SK-N-SH (cell line): ENCODE measurements at regions of chr11 and their contacts with region 1.

Region 1: GRCh38 chr11:33857933-33858371 is 33.9 kb downstream of the LMO2 start:
- DNase-seq: peak; percentile 81
- H3K4me3 ChIP-seq: no peak overlapping the region; a peak in 1 of 4 replicates
- H3K27ac ChIP-seq: no peak overlapping the region
- H3K4me1 ChIP-seq: peaks cover 0 to 5% of the 10 kb centered on the region in 2 experiments; a peak in 2 of 4 replicates
- H3K27me3 ChIP-seq: peaks cover 59% of the 10 kb centered on the region
- CTCF ChIP-seq: peak; percentile 93
- EP300 ChIP-seq: no peak
- RAD21 ChIP-seq: peak; percentile 90

Region 2: GRCh38 chr11:33606762-33607161 is 251.2 kb before region 1 on chr11:
- CTCF ChIA-PET with region 1: no interaction called
- POLR2A ChIA-PET with region 1: no interaction called
- DNase-seq: no peak
- H3K4me3 ChIP-seq: no peak overlapping the region
- H3K27ac ChIP-seq: no peak overlapping the region
- H3K4me1 ChIP-seq: no peaks in the 10 kb centered on the region
- H3K27me3 ChIP-seq: no peaks in the 10 kb centered on the region
- CTCF ChIP-seq: no peak
- EP300 ChIP-seq: no peak
- RAD21 ChIP-seq: no peak

Region 3: DNA sequence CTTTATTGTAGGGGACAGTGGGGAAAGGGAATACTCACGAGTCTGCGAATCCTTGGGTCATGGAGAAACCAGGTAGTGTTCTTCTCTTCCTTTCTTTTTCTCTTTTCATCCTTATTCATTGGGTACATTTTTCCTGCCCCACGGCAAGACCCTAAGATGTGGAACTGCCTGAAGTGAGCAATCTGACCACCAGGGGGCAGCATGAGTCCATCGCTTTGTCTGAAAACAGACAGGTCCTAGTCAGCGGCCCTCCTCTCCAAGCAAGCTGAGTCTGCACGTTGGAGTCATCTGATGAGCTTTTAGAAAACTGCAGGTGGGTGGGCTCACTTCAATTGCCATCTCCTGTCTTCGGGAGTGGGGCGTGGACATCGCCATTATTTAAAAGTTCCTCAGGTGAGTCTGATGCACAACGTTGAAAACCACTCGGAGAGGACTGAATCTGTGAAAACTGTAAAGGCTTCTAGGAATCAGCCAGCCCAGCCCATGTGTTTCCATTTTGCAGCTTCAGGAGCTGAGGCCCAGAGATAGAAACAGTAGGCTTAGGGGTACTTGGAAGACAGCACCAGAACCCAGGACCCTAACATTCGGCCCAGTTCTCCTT is 49.6 kb before region 1 on chr11:
- CTCF ChIA-PET with region 1: interaction called, 23 read pairs
- POLR2A ChIA-PET with region 1: no interaction called
- DNase-seq: peak; percentile 71
- H3K4me3 ChIP-seq: peak overlapping the region in 1 of 2 experiments; percentile 25; a peak in 1 of 4 replicates
- H3K27ac ChIP-seq: no peak overlapping the region
- H3K4me1 ChIP-seq: no peaks in the 10 kb centered on the region; a peak in 2 of 4 replicates
- H3K27me3 ChIP-seq: peaks cover 6% of the 10 kb centered on the region; the same call in 1 of the 2 replicates
- CTCF ChIP-seq: peak; percentile 88
- EP300 ChIP-seq: no peak
- RAD21 ChIP-seq: peak; percentile 83

Region 4: DNA sequence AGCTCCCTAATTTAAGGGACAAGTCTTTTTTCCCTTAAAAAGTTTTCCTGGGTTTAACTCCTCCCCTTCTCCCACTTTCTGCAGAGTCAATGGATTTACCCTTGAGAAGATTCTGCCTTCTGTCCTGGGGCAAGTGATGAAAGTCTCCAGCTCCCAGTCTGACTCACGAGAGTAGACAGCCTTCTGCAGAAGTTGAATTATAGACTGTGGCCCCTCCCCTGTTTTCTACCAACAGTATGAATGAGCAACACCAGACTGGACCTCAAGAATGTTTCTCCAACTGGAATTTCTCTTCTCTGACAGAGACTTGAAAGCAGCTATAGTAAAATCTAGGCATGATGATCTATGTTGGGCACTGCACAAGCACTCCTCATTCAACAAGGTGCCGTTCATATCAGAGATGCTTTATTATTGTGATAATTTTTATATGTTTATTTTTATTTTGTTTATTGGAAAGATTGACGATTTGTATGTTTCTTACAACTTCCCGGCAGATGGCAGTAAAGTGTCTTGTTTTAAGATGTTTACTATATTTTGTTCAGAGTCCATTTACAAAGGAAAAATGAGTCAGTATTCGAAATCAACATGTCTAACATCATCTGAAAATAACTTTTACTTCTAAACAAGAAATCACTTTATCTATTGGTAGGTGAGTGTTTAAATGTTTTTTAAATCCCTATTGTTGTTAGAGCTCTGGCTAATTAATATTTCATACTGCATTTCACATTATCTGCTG is 22.6 kb before region 1 on chr11:
- CTCF ChIA-PET with region 1: interaction called, 18 read pairs
- POLR2A ChIA-PET with region 1: no interaction called
- DNase-seq: peak; percentile 39
- H3K4me3 ChIP-seq: no peak overlapping the region; a peak in 1 of 4 replicates
- H3K27ac ChIP-seq: no peak overlapping the region
- H3K4me1 ChIP-seq: peaks cover 0 to 23% of the 10 kb centered on the region in 2 experiments; a peak in 2 of 4 replicates
- H3K27me3 ChIP-seq: peaks cover 17% of the 10 kb centered on the region; the same call in 1 of the 2 replicates
- CTCF ChIP-seq: peak; percentile 60
- EP300 ChIP-seq: no peak
- RAD21 ChIP-seq: peak; percentile 70

Region 5: DNA sequence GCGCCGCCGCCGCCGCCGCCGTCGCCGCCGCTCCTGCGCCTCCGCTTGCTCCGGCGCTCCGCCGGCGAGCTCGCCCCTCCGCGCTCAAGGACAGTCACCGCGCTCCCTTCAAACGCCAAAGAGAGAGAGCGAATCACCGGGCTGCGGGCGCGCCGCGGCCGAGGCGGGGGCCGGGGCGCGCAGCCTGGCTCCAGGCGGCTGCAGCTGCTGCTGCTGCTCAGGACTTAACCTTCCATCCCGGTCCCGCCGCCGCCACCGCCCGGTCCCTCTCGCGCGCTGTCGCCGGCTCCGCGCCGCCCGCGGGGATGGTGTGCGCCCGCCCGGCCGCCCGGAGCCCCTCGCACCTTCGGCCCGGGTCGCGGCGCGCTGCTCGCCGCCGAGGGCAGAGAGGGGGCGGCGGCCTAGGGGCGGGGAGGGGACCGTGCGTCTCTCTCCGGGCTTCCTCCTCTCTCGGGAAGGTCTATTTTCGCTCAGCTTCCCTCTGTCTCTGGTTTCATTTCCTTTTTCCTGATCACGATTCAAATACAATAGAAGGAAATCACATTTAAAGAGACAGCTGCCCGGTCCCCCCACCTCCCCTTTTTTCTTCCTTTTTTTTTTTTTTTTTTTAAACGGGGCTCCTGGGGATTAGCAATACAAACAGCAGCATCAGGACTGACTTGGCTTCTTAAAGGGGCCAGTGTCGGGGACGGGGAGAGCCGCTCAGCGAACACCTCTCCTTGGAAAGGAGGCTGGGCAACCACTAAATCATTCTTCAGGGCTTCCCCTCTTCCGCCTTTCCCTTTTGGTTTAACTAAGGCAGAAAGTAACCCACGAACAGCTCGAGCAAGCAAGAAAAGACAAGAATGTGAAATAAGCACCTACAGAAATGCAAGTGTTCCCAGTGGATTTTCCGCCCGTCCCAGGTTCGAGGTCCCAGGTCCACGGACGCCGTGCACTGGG is 11.8 kb after region 1 on chr11:
- CTCF ChIA-PET with region 1: interaction called, 64 read pairs
- POLR2A ChIA-PET with region 1: no interaction called
- DNase-seq: peak; percentile 84
- H3K4me3 ChIP-seq: peak overlapping the region; percentile 60 to 63
- H3K27ac ChIP-seq: no peak overlapping the region
- H3K4me1 ChIP-seq: peaks cover 7% of the 10 kb centered on the region in 2 experiments; a peak in 2 of 4 replicates
- H3K27me3 ChIP-seq: peaks cover 72% of the 10 kb centered on the region
- CTCF ChIP-seq: no peak
- EP300 ChIP-seq: no peak
- RAD21 ChIP-seq: no peak

Region 6: DNA sequence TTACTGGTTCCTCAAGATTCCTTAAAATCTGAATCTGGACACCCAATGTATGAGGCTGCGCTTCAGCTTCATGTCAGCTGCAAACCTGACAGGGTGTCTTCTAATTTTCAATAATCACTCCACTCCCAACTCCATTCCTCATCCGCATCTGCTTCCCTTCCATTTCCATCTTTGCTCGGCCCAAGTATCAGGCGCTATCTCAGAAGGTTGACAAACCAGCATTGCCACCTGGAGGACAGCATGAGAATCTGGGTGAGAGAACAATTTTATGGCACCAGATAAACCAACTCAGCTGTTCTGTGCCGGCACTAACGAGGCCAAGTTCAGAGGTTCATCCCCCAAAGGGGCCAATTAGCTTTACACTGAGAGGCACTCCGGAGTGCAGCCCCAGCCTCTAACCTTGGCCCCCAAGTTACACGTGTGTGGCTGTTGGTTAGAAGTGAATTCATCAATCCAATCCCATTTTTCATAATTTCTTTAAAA is 113.1 kb after region 1 on chr11:
- CTCF ChIA-PET with region 1: interaction called, 61 read pairs
- POLR2A ChIA-PET with region 1: no interaction called
- DNase-seq: peak; percentile 66
- H3K4me3 ChIP-seq: no peak overlapping the region
- H3K27ac ChIP-seq: no peak overlapping the region
- H3K4me1 ChIP-seq: peaks cover 0 to 7% of the 10 kb centered on the region in 2 experiments; a peak in 1 of 4 replicates
- H3K27me3 ChIP-seq: peaks cover 14% of the 10 kb centered on the region; the same call in 1 of the 2 replicates
- CTCF ChIP-seq: peak; percentile 66
- EP300 ChIP-seq: no peak
- RAD21 ChIP-seq: peak; percentile 89

Region 7: DNA sequence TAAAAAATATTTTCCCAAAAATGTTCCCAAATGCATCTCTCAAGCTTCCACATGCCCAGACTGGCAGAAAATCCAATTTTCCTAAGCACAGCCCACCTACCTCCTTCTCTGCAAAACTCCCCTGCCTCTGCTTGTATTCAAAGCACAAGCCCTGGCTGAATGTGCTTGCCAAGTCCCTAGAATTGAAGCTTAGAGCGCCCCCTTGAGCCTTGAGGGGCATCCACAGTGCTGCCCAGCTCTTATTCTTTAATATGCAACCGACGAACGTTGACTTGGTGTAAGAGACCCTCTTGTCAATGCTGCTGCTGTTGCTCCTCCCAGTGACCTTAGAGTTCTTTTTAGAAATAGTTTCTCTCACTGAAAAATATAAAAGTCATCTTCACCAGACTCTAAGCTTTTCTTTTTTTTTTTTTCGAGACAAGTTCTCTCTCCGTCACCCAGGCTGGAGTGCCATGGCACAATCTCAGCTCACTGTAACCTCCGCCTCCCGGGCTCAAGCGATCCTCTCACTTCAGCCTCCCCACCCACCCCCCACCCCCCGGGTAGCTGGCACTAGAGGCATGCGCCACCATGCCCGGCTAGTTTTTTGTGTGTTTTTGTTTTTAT is 130.1 kb after region 1 on chr11:
- CTCF ChIA-PET with region 1: interaction called, 45 read pairs
- POLR2A ChIA-PET with region 1: no interaction called
- DNase-seq: peak; percentile 85
- H3K4me3 ChIP-seq: no peak overlapping the region
- H3K27ac ChIP-seq: no peak overlapping the region
- H3K4me1 ChIP-seq: peaks cover 0 to 10% of the 10 kb centered on the region in 2 experiments; a peak in 1 of 4 replicates
- H3K27me3 ChIP-seq: peaks cover 7% of the 10 kb centered on the region; the same call in 1 of the 2 replicates
- CTCF ChIP-seq: peak; percentile 93
- EP300 ChIP-seq: no peak
- RAD21 ChIP-seq: peak; percentile 86